Activated CD8-positive, alpha-beta T cell treated with anti-CD3 and anti-CD28 coated beads, Interleukin-2, amount 10 ng/mL, durations not matched to agents 7 days and 5 days (primary cell): ENCODE measurements at regions of chr10 and their contacts with region 1.

Region 1: GRCh38 chr10:101569838-101570766 is 18.0 kb downstream of the POLL start:
- DNase-seq: peak; percentile 85
- ATAC-seq: peak; percentile 87
- H3K4me3 Mint-ChIP-seq: peak overlapping the region; percentile 69
- H3K27ac Mint-ChIP-seq: no peak overlapping the region
- H3K4me1 Mint-ChIP-seq: peaks cover 20% of the 10 kb centered on the region
- H3K27me3 Mint-ChIP-seq: peaks cover 49% of the 10 kb centered on the region

Region 2: GRCh38 chr10:101272229-101272868 is 297.8 kb before region 1 on chr10:
- CTCF ChIA-PET with region 1: interaction called, 14 read pairs
- POLR2A ChIA-PET with region 1: no interaction called
- DNase-seq: peak; percentile 67
- ATAC-seq: peak; percentile 90
- H3K4me3 Mint-ChIP-seq: no peak overlapping the region
- H3K27ac Mint-ChIP-seq: no peak overlapping the region
- H3K4me1 Mint-ChIP-seq: no peaks in the 10 kb centered on the region
- H3K27me3 Mint-ChIP-seq: peaks cover 17% of the 10 kb centered on the region

Region 3: DNA sequence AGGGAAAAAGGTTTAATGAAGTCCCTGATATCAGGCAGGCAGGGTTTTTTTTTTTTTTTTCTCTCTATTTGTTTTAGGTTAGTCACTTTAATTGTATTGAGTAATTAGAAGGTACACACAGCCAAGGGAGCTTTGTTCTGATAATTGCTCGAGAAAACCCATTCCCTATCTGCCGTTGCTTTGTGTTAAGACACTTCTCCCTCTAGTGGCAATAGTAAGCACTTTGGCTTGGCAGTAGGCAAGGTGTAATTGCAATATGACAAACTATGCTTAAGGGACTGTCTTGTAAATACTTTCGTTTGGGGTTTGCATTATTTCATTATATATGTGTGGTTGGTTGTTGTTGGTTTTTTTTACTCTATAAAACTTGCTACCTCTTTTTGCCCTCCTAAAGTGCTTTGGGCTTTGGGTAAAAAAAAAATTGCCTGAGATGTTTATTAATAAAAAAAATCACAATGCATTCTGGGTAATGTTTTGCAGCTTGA is 102.8 kb before region 1 on chr10:
- CTCF ChIA-PET with region 1: interaction called, 12 read pairs
- POLR2A ChIA-PET with region 1: no interaction called
- DNase-seq: peak; percentile 47
- ATAC-seq: peak; percentile 80
- H3K4me3 Mint-ChIP-seq: no peak overlapping the region
- H3K27ac Mint-ChIP-seq: no peak overlapping the region
- H3K4me1 Mint-ChIP-seq: peaks cover 4% of the 10 kb centered on the region
- H3K27me3 Mint-ChIP-seq: peaks cover 5% of the 10 kb centered on the region

Region 4: GRCh38 chr10:101536800-101537199 is 33.3 kb before region 1 on chr10:
- CTCF ChIA-PET with region 1: interaction called, 15 read pairs
- POLR2A ChIA-PET with region 1: no interaction called
- DNase-seq: no peak
- ATAC-seq: no peak
- H3K4me3 Mint-ChIP-seq: no peak overlapping the region
- H3K27ac Mint-ChIP-seq: no peak overlapping the region
- H3K4me1 Mint-ChIP-seq: peaks cover 4% of the 10 kb centered on the region
- H3K27me3 Mint-ChIP-seq: no peaks in the 10 kb centered on the region

Region 5: GRCh38 chr10:101558202-101558601 is 11.9 kb before region 1 on chr10:
- CTCF ChIA-PET with region 1: interaction called, 37 read pairs
- POLR2A ChIA-PET with region 1: no interaction called
- DNase-seq: no peak
- ATAC-seq: peak; percentile 70
- H3K4me3 Mint-ChIP-seq: no peak overlapping the region
- H3K27ac Mint-ChIP-seq: peak overlapping the region; percentile 31
- H3K4me1 Mint-ChIP-seq: peaks cover 20% of the 10 kb centered on the region
- H3K27me3 Mint-ChIP-seq: no peaks in the 10 kb centered on the region

Region 6: GRCh38 chr10:101580486-101581399 is 10.6 kb after region 1 on chr10:
- CTCF ChIA-PET with region 1: interaction called, 15 read pairs
- POLR2A ChIA-PET with region 1: no interaction called
- DNase-seq: no peak
- ATAC-seq: no peak
- H3K4me3 Mint-ChIP-seq: no peak overlapping the region
- H3K27ac Mint-ChIP-seq: no peak overlapping the region
- H3K4me1 Mint-ChIP-seq: peaks cover 3% of the 10 kb centered on the region
- H3K27me3 Mint-ChIP-seq: no peaks in the 10 kb centered on the region

Region 7: DNA sequence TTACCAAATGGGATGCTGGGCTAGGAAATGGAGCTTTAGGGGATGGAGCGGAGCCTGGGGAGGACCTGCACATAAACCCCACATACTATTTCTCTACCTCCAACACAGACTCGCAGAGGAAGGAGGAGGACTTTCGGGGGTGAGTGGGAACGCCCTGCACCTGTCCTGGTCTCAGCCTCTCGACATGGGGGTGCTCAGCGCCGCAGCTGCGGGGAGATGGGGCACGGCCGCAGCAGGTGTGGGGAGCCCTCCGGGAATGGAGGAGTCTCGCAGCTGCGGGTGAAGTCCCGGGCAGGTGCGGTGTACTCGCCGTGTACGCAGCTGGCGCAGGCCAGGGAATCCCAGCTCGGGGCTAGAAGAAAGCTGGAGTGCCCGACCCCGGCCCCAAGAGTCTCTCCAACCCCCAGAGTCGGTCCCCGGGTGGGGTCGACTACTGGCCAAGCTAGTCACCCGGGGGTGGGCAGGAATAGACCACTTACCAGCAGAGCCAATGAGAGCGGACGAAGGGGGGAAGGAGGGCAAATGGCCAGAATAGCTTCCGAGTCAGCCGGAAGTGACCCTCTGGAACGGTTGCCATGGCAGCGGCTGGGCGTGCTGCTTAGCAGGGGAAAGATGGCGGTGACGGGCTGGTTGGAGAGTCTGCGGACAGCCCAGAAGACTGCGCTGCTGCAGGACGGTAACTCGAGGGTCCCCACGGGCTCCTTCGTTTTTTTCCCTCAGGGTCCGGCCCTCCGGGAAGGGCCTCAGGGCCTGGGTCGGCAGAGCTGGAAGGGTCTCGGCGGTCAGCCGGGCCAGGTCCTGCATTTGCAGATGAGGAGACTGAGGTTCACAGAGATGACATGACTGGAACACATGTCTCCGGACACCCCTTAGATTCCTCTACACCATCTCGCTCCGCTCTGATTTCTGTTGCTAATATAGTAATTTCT is 17.9 kb after region 1 on chr10 and contains the starts of genes DPCD and POLL:
- CTCF ChIA-PET with region 1: interaction called, 11 read pairs
- POLR2A ChIA-PET with region 1: interaction called, 4 read pairs
- DNase-seq: peak; percentile 95
- ATAC-seq: peak; percentile 94
- H3K4me3 Mint-ChIP-seq: peak within 1 kb of the TSS; percentile 91
- H3K27ac Mint-ChIP-seq: peak within 1 kb of the TSS; percentile 85
- H3K4me1 Mint-ChIP-seq: peaks cover 24% of the 10 kb centered on the region
- H3K27me3 Mint-ChIP-seq: no peaks in the 10 kb centered on the region
- total RNA-seq, gene DPCD: 5.1 to 6.2 TPM
- total RNA-seq, gene POLL: 25.3 to 28.5 TPM